Activated CD4-positive, alpha-beta T cell treated with anti-CD3 and anti-CD28 coated beads, Interleukin-2, amount 10 ng/mL, durations not matched to agents 24 days and 14 days (primary cell): ENCODE measurements at regions of chr2 and their contacts with region 1.

Region 1: DNA sequence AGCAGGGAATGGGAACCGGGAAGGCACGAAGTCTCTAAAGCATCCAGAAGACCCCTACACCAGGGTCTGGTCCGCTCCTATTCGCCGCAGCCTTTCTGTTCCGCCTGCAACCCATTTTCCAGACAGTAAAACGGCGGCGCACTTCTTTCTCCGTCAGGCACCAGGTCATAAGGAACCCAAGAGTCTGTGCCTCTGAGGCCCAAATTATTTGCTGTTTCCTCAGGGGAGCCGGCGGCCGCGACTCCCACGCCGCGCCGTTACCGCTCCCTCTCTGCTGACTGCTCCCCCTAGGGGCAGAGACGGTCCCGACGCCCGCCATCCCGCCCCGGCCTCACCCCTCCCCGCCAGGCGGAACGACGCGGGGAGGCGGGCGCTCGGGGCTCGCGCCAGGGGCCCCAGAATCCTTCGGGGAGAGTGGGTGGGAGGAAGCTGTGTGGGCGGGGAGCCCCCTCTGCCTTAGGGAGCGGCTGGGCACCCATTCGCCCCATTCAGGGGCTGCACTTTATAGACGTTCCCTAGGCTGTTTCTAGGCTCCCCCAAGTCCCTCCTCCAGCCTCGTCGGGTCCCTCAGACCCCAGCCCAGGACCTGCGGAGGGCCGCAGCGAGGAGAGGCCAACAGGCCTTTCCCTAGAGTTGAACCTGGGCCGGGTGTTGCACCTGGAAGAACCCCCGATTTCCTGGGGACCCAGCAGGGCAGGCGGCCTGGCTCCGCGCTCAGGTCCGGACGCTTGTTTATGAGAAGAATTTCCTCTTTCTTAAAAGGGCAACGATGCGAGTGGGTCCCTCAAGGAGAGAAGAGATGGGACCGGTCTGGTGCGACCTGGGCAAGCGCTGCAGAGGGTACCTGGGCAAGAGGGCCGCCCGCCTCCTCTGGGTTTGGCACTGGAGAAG is 3.6 kb upstream of the CTDSP1 start:
- DNase-seq: peak; percentile 98
- H3K4me3 Mint-ChIP-seq: peak overlapping the region; percentile 83
- H3K27ac Mint-ChIP-seq: peak overlapping the region; percentile 90
- H3K4me1 Mint-ChIP-seq: peaks cover 26% of the 10 kb centered on the region
- H3K27me3 Mint-ChIP-seq: no peaks in the 10 kb centered on the region

Region 2: GRCh38 chr2:218186355-218186766 is 209.7 kb before region 1 on chr2:
- intact Hi-C with region 1: loop called (anchors 5 kb)
- DNase-seq: peak; percentile 90
- H3K4me3 Mint-ChIP-seq: no peak overlapping the region
- H3K27ac Mint-ChIP-seq: no peak overlapping the region
- H3K4me1 Mint-ChIP-seq: peaks cover 8% of the 10 kb centered on the region
- H3K27me3 Mint-ChIP-seq: peaks cover 13% of the 10 kb centered on the region

Region 3: GRCh38 chr2:218286570-218287459 is 109.2 kb before region 1 on chr2:
- intact Hi-C with region 1: loop called (anchors 1 kb)
- DNase-seq: peak; percentile 95
- H3K4me3 Mint-ChIP-seq: peak overlapping the region; percentile 86
- H3K27ac Mint-ChIP-seq: peak overlapping the region; percentile 92
- H3K4me1 Mint-ChIP-seq: peaks cover 67% of the 10 kb centered on the region
- H3K27me3 Mint-ChIP-seq: no peaks in the 10 kb centered on the region

Region 4: DNA sequence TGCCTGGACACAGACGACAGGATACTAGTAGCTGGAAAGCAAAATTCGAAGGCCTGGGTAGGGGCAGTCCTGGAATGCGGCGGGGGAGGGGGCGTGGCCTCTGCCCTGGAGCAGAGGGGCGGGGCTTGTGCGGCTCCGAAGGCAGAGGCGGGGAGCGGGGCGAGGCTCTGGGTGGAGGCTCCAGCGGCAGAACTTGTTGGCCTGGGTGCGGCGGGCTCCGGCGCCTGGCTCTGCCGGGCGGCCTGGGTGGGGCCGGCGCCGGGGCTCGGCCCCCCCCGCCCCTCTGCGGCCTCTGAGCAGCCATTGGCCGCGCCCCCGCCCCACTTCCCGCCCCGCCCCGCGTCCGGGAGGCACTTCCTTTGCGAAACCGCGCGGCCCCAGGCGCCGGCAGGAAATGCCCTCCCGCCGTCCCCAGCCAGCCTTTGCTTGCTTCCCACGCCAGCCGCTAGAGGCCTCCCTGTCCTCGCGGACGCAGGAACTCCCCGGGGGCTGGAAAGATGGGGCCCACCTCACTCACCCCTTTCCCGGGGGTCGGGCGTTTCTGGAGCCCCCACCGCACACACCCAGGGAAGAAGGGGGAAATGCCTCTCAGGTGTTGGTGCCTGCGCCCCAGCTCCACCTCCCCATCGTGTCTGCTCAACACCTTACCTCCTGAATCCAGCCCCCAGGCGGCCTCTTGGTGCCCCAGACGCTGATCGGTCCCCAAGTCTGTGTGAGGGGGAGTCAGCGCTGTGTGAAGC is 10.3 kb after region 1 on chr2:
- intact Hi-C with region 1: loop called (anchors 1 kb)
- DNase-seq: peak; percentile 97
- H3K4me3 Mint-ChIP-seq: peak overlapping the region; percentile 85
- H3K27ac Mint-ChIP-seq: peak overlapping the region; percentile 86
- H3K4me1 Mint-ChIP-seq: peaks cover 45% of the 10 kb centered on the region
- H3K27me3 Mint-ChIP-seq: no peaks in the 10 kb centered on the region

Region 5: DNA sequence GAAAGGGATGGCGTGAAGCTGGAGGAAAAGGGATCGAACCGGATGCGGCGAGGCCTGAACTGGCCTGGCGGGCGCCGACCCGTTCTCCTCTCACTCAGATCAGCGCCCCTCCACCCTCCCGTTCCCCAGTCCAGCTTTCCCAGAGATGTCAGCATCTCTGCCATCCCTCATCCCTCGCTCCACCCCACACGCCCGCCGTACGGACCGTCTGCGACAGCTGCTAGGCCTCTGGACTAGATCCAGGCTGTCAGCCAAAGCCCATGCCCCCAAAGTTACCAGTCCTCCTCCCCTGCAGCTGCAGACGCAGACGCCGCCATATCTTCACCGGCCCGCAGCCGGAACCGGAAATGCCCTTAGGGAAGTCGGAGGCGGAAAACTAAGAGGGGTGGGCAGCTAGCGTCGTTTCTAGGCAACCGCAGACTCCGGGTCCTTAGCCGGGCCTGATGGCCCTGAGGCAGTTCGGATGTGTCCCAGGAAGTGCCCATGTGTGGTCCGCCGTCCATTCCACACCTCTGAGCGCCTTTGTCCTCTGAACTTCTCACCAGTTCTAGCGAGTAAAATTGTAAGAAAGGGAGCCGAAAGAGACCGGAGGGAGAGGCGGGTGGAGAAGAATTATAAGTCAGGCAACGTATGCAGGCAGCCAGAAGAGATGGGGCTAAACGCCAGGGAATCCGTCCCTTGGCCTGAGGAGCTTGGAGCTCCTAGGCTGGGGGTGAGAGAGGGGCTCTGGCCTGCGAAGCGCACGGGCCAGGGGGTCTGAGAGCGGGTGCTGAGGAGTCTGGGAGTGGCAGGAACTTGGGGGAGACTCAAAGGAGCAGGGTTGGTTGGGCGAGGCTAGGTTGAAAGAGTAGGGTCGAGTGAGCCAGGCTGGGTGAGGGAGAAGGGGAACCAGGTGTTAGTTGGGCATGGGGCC is 275.9 kb after region 1 on chr2 and contains the starts of genes RNF25 and STK36:
- intact Hi-C with region 1: loop called (anchors 5 kb)
- DNase-seq: peak; percentile 95
- H3K4me3 Mint-ChIP-seq: peak within 1 kb of the TSS; percentile 97
- H3K27ac Mint-ChIP-seq: peak within 1 kb of the TSS; percentile 94
- H3K4me1 Mint-ChIP-seq: peaks cover 22% of the 10 kb centered on the region
- H3K27me3 Mint-ChIP-seq: no peaks in the 10 kb centered on the region
- total RNA-seq, gene RNF25: 23.6 and 28.8 TPM in 2 replicates
- total RNA-seq, gene STK36: 20.2 and 21.3 TPM in 2 replicates

Region 6: DNA sequence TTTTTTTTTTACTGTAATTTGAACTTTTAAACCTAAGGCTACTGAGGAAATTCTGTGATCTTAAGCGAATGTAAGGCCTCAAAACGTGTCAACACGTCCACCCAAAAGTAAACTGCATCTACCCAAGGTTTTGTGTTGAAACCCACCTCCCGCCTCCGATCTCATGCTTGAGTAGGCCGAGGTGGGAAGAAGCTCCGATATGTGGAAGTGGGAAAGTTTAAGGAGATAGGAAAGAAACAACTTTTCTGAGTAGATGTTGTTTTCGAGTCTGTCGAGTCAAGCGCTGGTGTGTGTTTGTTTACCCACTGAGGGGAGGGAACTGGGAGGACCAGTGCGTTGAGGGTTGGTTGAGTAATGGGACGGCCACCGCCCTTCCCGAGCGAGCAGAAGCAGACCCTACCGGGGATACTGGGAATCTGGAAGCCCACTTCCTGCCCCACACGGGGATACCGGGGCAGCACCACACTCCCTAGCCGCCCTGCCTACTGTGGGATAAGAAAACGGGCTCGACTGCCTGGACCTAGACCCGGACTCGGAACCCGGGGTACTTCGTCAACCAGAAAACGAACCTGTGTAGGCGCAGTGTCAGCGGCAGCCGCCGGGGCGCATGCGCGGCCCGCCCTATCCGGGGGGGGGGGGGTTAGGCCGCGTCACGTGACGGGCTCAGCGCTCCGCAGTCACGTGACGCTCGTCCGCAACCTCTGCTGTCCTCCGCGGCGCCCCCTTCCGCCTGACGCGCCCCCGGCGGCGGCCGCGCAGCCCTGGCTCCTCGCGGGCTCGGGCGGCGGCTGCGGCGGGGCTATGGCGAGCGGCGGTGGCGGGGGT is 781.7 kb after region 1 on chr2 and contains the start of gene RETREG2:
- intact Hi-C with region 1: loop called (anchors 2 kb)
- DNase-seq: peak; percentile 93
- H3K4me3 Mint-ChIP-seq: peak within 1 kb of the TSS; percentile 94
- H3K27ac Mint-ChIP-seq: peak within 1 kb of the TSS; percentile 99
- H3K4me1 Mint-ChIP-seq: peaks cover 62% of the 10 kb centered on the region
- H3K27me3 Mint-ChIP-seq: no peaks in the 10 kb centered on the region
- total RNA-seq, gene RETREG2: 54.1 and 57.4 TPM in 2 replicates